Activated naive CD4-positive, alpha-beta T cell treated with anti-CD3 and anti-CD28 coated beads for 36 hours (primary cell): ENCODE measurements at regions of chr7 and their contacts with region 1.

Region 1: GRCh38 chr7:23273141-23273599 is 26.0 kb upstream of the MALSU1 start:
- DNase-seq: peak; percentile 97
- H3K4me3 Mint-ChIP-seq: peak overlapping the region; percentile 67
- H3K27ac Mint-ChIP-seq: no peak overlapping the region
- H3K4me1 Mint-ChIP-seq: peaks cover 7% of the 10 kb centered on the region
- H3K27me3 Mint-ChIP-seq: peaks cover 2% of the 10 kb centered on the region

Region 2: GRCh38 chr7:23287612-23288011 is 14.4 kb after region 1 on chr7:
- CTCF ChIA-PET with region 1: interaction called, 42 read pairs
- intact Hi-C with region 1: no loop called
- DNase-seq: peak; percentile 17
- H3K4me3 Mint-ChIP-seq: no peak overlapping the region
- H3K27ac Mint-ChIP-seq: peak overlapping the region; percentile 50
- H3K4me1 Mint-ChIP-seq: peaks cover 20% of the 10 kb centered on the region
- H3K27me3 Mint-ChIP-seq: no peaks in the 10 kb centered on the region

Region 3: GRCh38 chr7:23347682-23348180 is 74.6 kb after region 1 on chr7:
- CTCF ChIA-PET with region 1: interaction called, 17 read pairs
- intact Hi-C with region 1: loop called (anchors 1 kb)
- DNase-seq: peak; percentile 20
- H3K4me3 Mint-ChIP-seq: peak overlapping the region; percentile 8
- H3K27ac Mint-ChIP-seq: peak overlapping the region; percentile 64
- H3K4me1 Mint-ChIP-seq: peaks cover 32% of the 10 kb centered on the region
- H3K27me3 Mint-ChIP-seq: no peaks in the 10 kb centered on the region

Region 4: GRCh38 chr7:23462846-23463245 is 189.7 kb after region 1 on chr7:
- CTCF ChIA-PET with region 1: interaction called, 36 read pairs
- intact Hi-C with region 1: loop called (anchors 1 kb)
- DNase-seq: peak; percentile 56
- H3K4me3 Mint-ChIP-seq: no peak overlapping the region
- H3K27ac Mint-ChIP-seq: no peak overlapping the region
- H3K4me1 Mint-ChIP-seq: peaks cover 5% of the 10 kb centered on the region
- H3K27me3 Mint-ChIP-seq: peaks cover 64% of the 10 kb centered on the region

Region 5: DNA sequence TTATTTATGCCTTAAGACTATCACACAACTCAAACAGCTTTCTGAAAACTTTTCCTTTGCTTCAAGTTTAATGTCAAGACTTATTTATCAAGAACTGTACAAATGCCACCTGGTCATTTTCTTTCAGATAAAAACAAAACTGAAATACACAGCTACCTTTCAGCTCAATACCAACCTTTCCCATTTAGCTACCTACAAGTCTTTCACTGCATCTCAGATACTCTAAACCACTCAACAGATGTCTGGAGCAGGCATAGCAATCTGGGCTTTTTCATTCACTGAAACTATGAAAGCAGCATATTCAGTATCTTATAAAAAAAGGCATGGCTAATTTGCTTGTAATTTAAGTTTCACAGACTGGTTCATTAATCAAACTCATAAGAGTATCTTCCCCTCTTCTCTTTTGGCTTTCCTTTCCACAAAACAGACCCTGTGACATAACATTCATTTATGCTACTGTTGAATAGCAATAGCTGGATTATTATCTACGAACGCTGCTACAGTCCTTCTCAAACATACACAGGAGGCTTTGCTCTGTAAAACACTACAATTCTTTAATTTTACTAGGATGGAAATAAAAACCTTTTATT is 250.4 kb after region 1 on chr7:
- CTCF ChIA-PET with region 1: interaction called, 13 read pairs
- intact Hi-C with region 1: no loop called
- DNase-seq: no peak
- H3K4me3 Mint-ChIP-seq: no peak overlapping the region
- H3K27ac Mint-ChIP-seq: no peak overlapping the region
- H3K4me1 Mint-ChIP-seq: peaks cover 57% of the 10 kb centered on the region
- H3K27me3 Mint-ChIP-seq: no peaks in the 10 kb centered on the region

Region 6: DNA sequence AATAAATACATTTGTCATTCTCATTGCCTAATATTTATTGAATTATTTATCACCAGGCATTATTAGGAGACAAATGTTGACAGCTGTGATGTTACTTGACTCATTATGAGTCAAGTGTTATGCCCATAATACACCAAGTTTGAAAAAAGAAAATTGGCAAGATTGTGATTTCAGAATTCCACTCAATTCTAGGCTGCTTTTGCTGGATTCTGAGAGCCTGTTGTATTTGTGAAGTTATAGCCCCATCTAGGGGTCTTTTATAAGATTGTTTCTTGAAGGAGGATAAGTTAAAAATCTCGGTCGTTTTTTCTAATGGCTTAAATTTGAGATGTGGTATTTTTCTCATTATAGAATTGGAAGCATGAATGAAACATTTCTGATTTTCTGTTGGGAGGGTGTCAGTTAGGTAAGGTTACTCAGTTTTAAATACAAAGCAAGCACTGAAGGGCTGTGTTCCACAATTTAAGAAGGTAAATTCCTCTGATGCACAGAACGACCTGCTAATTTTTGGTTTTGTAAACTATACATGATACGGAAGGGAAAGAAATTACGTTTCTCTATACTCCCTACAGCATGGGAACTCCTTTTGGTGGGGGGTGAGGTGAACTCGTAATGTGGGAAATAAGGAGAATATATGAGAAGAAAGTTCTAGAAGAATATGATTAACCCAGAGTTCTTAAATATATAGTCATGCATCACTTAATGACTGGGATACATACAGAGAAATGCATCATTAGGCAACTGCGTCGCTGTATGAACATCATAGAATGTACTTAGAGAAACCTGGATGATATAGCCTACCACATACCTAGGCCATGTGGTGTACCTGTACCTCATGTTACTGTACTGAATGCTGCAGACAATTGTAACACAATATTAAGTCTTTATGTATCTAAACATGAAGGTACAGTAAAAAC is 439.5 kb after region 1 on chr7:
- CTCF ChIA-PET with region 1: interaction called, 4 read pairs
- intact Hi-C with region 1: loop called (anchors 1 kb)
- DNase-seq: no peak
- H3K4me3 Mint-ChIP-seq: no peak overlapping the region
- H3K27ac Mint-ChIP-seq: no peak overlapping the region
- H3K4me1 Mint-ChIP-seq: no peaks in the 10 kb centered on the region
- H3K27me3 Mint-ChIP-seq: peaks cover 2% of the 10 kb centered on the region

Region 7: GRCh38 chr7:24442170-24442777 is 1169.1 kb after region 1 on chr7:
- CTCF ChIA-PET with region 1: no interaction called
- intact Hi-C with region 1: no loop called
- DNase-seq: no peak
- H3K4me3 Mint-ChIP-seq: no peak overlapping the region
- H3K27ac Mint-ChIP-seq: no peak overlapping the region
- H3K4me1 Mint-ChIP-seq: peaks cover 7% of the 10 kb centered on the region
- H3K27me3 Mint-ChIP-seq: no peaks in the 10 kb centered on the region